Posterior vena cava (tissue), 2 donors: ENCODE measurements at regions of chr14 and their contacts with region 1.

Region 1: GRCh38 chr14:96275177-96276112 is 19.4 kb downstream of the BDKRB1 start:
- DNase-seq: peak; percentile 92

Region 2: GRCh38 chr14:95915323-95915722 is 360.1 kb before region 1 on chr14:
- intact Hi-C with region 1: no loop called
- DNase-seq: no peak

Region 3: DNA sequence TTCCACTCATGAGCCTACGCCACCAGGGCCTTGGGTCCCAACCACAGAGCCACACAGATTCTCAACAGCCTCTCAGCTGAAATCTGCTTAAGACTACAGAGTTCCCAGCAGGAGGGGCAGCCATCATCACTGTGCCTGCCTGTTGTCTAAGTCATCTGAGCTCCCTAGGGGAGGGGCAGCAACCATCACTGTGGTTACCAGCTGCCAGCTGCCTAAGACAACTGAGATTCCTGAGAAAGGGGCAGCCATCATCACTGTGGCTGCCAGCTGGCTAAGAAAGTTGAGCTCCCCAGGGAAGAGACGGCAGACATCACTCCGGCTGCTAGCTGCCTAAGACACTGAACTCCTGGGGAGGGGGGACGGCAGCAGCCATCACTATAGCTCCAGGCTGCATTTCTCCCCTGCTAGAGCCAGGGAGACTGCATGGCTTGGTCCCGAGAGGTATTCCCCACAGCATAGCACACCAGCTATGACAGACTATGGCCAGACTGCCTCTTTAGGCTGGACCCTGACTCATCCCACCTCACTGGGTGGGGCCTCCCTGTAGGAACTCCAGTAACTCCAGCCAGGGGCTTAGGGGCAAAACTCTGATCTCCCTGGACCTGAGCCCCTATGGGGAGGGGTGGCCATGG is 273.5 kb before region 1 on chr14:
- intact Hi-C with region 1: loop called (anchors 10 kb)
- DNase-seq: no peak

Region 4: GRCh38 chr14:96090441-96091133 is 184.9 kb before region 1 on chr14:
- intact Hi-C with region 1: loop called in 1 of 2 experiments (anchors 1 kb)
- DNase-seq: peak; percentile 89

Region 5: GRCh38 chr14:96100161-96101029 is 175.1 kb before region 1 on chr14:
- intact Hi-C with region 1: loop called in 1 of 2 experiments (anchors 5 kb)
- DNase-seq: peak; percentile 91